Calu3 (cell line): ENCODE measurements at regions of chr1 and their contacts with region 1.

Region 1: DNA sequence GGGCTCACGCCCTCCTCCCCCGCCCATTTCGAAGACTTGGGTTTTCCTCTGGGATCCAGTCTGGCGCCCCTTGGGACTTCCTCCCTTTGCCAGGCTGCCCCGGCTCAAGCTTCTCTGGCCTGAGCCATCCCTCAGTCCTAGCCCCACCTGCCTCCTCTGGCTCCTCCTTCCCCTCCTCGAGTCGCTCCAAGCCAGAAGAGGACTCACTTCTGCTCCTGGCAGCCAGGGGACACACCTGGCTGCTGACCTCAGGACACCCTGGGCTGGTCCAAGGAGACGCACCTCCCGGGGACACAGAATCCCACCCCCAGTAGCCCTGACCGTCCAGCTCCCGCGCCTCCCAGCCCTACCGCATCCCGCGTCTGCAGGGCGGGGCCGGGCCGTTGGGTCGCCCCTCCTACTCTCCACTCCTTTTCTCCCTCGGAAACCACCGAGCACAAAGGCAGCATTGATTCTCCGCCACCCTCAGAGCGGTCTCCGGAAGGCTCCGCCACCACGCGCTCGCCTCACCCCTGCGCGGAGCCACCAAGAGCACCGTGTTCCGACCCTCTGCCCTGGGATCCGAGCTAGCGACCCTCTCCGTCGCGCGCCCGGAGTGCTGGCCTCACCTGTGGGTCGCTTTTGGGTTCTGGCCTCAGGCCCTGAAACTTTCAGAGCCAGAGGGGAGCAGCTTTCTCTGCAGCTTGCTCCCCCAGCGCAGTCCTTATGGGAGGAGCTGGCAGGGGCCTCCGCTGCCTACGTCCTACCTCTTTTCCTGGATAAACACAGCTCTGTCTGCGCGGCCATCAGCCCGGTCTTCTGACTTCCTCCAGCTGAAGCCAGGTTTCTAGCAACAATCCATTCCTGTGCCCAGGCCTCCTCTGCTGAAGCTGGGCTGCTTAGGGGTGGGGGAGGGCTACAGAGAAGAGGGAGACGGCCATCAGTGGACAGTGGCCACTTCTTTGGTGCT is at the start of gene C2CD4D:
- DNase-seq: peak; percentile 96
- H3K4me3 Mint-ChIP-seq: peak within 1 kb of the TSS; percentile 91
- H3K27ac Mint-ChIP-seq: peak within 1 kb of the TSS; percentile 98
- H3K4me1 Mint-ChIP-seq: peaks cover 51% of the 10 kb centered on the region
- H3K27me3 Mint-ChIP-seq: no peaks in the 10 kb centered on the region
- CTCF ChIP-seq: no peak
- total RNA-seq, gene C2CD4D: 1.7 and 2.5 TPM in 2 replicates

Region 2: GRCh38 chr1:151198255-151199127 is 641.2 kb before region 1 on chr1 and contains the start of gene PIP5K1A:
- CTCF ChIA-PET with region 1: no interaction called
- intact Hi-C with region 1: loop called (anchors 10 kb)
- DNase-seq: peak; percentile 98
- H3K4me3 Mint-ChIP-seq: peak within 1 kb of the TSS; percentile 96
- H3K27ac Mint-ChIP-seq: peak within 1 kb of the TSS; percentile 95
- H3K4me1 Mint-ChIP-seq: peaks cover 31% of the 10 kb centered on the region
- H3K27me3 Mint-ChIP-seq: no peaks in the 10 kb centered on the region
- CTCF ChIP-seq: no peak
- total RNA-seq, gene PIP5K1A: 86.6 and 96.2 TPM in 2 replicates

Region 3: DNA sequence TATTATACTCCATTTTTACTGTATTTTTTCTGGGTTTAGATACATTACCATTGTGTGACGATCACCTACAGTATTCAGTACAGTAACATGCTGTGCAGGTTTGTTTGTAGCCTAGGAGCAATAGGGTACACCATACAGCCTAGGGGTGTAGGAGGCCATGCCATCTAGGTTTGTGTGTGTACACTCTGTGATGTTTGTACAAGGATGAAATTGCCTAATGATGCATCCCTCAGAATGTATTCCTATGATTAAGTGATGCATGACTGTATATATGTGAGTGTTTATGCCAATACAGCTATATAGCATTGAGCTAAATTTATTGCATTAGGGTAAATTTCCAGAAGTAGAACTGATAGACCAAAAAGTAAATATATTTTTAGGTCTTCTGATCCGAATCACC is 276.3 kb before region 1 on chr1:
- CTCF ChIA-PET with region 1: no interaction called
- intact Hi-C with region 1: no loop called
- DNase-seq: no peak
- H3K4me3 Mint-ChIP-seq: no peak overlapping the region
- H3K27ac Mint-ChIP-seq: no peak overlapping the region
- H3K4me1 Mint-ChIP-seq: peaks cover 8% of the 10 kb centered on the region
- H3K27me3 Mint-ChIP-seq: no peaks in the 10 kb centered on the region
- CTCF ChIP-seq: no peak

Region 4: GRCh38 chr1:151594143-151594625 is 245.5 kb before region 1 on chr1:
- CTCF ChIA-PET with region 1: interaction called, 4 read pairs
- intact Hi-C with region 1: loop called (anchors 5 kb)
- DNase-seq: peak; percentile 93
- H3K4me3 Mint-ChIP-seq: no peak overlapping the region
- H3K27ac Mint-ChIP-seq: peak overlapping the region; percentile 27
- H3K4me1 Mint-ChIP-seq: peaks cover 40% of the 10 kb centered on the region
- H3K27me3 Mint-ChIP-seq: no peaks in the 10 kb centered on the region
- CTCF ChIP-seq: peak; percentile 94

Region 5: GRCh38 chr1:151693076-151693651 is 146.6 kb before region 1 on chr1:
- CTCF ChIA-PET with region 1: interaction called, 4 read pairs
- intact Hi-C with region 1: loop called (anchors 1 kb)
- DNase-seq: peak; percentile 34
- H3K4me3 Mint-ChIP-seq: no peak overlapping the region
- H3K27ac Mint-ChIP-seq: no peak overlapping the region
- H3K4me1 Mint-ChIP-seq: no peaks in the 10 kb centered on the region
- H3K27me3 Mint-ChIP-seq: no peaks in the 10 kb centered on the region
- CTCF ChIP-seq: peak; percentile 39

Region 6: GRCh38 chr1:151790071-151790940 is 49.4 kb before region 1 on chr1 and contains the start of gene TDRKH:
- CTCF ChIA-PET with region 1: interaction called, 3 read pairs
- intact Hi-C with region 1: loop called (anchors 2 kb)
- DNase-seq: peak; percentile 99
- H3K4me3 Mint-ChIP-seq: peak within 1 kb of the TSS; percentile 91
- H3K27ac Mint-ChIP-seq: peak within 1 kb of the TSS; percentile 82
- H3K4me1 Mint-ChIP-seq: no peaks in the 10 kb centered on the region
- H3K27me3 Mint-ChIP-seq: no peaks in the 10 kb centered on the region
- CTCF ChIP-seq: peak; percentile 33
- total RNA-seq, gene TDRKH: 20.2 and 25.7 TPM in 2 replicates